Activated CD4-positive, alpha-beta memory T cell treated with anti-CD3 and anti-CD28 coated beads, Interleukin-2, amount 10 ng/mL, durations not matched to agents 7 days and 5 days (primary cell): ENCODE measurements at regions of chr5 and their contacts with region 1.

Region 1: DNA sequence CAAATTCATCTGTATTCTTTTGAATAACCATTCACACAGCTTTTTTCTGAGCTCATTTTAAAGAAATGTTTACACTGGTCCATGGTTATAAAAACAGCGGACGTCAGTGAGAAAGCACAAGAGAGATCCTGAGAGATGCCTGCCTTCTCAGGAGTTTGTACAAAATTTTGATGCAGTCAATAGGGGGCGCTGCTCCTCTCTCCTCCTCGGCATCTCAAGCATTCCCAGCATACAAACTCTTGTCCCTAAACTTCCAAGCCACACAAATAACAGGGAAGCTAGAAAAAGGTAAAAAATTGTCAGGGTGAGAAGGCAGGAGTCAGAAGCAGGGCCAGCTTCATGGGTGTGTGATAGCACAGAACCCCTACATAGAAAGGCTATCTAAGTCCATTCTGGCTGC is 11.2 kb upstream of the CCDC152 start:
- DNase-seq: no peak
- H3K4me3 Mint-ChIP-seq: no peak overlapping the region
- H3K27ac Mint-ChIP-seq: no peak overlapping the region
- H3K4me1 Mint-ChIP-seq: peaks cover 9% of the 10 kb centered on the region
- H3K27me3 Mint-ChIP-seq: peaks cover 1% of the 10 kb centered on the region

Region 2: GRCh38 chr5:42680046-42680445 is 65.4 kb before region 1 on chr5:
- CTCF ChIA-PET with region 1: no interaction called
- POLR2A ChIA-PET with region 1: no interaction called
- DNase-seq: no peak
- H3K4me3 Mint-ChIP-seq: no peak overlapping the region
- H3K27ac Mint-ChIP-seq: no peak overlapping the region
- H3K4me1 Mint-ChIP-seq: peaks cover 4% of the 10 kb centered on the region
- H3K27me3 Mint-ChIP-seq: no peaks in the 10 kb centered on the region

Region 3: DNA sequence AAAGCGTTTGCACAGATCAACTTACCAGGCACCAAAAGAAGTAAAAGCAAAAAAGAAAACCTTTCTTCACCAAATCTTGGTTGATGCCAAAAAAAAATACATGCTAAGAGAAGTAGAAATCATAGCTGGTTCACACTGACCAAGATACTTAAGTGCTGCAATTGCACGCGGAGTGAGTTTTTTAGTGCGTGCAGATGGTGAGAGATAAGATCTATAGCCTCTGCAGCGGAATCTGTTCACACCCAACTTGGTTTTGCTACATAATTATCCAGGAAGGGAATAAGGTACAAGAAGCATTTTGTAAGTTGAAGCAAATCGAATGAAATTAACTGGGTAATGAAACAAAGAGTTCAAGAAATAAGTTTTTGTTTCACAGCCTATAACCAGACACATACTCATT is 25.2 kb before region 1 on chr5:
- CTCF ChIA-PET with region 1: interaction called, 11 read pairs
- POLR2A ChIA-PET with region 1: interaction called, 5 read pairs
- DNase-seq: peak; percentile 54
- H3K4me3 Mint-ChIP-seq: peak overlapping the region; percentile 45
- H3K27ac Mint-ChIP-seq: peak overlapping the region; percentile 81
- H3K4me1 Mint-ChIP-seq: peaks cover 47% of the 10 kb centered on the region
- H3K27me3 Mint-ChIP-seq: peaks cover 9% of the 10 kb centered on the region

Region 4: GRCh38 chr5:42791151-42791550 is 45.7 kb after region 1 on chr5:
- CTCF ChIA-PET with region 1: no interaction called
- POLR2A ChIA-PET with region 1: no interaction called
- DNase-seq: no peak
- H3K4me3 Mint-ChIP-seq: no peak overlapping the region
- H3K27ac Mint-ChIP-seq: no peak overlapping the region
- H3K4me1 Mint-ChIP-seq: no peaks in the 10 kb centered on the region
- H3K27me3 Mint-ChIP-seq: peaks cover 3% of the 10 kb centered on the region

Region 5: GRCh38 chr5:42824347-42824976 is 79.0 kb after region 1 on chr5:
- CTCF ChIA-PET with region 1: no interaction called
- POLR2A ChIA-PET with region 1: no interaction called
- DNase-seq: no peak
- H3K4me3 Mint-ChIP-seq: no peak overlapping the region
- H3K27ac Mint-ChIP-seq: no peak overlapping the region
- H3K4me1 Mint-ChIP-seq: no peaks in the 10 kb centered on the region
- H3K27me3 Mint-ChIP-seq: peaks cover 5% of the 10 kb centered on the region